Heart right ventricle (tissue), 16 donors: ENCODE measurements at regions of chr6 and their contacts with region 1.

Region 1: DNA sequence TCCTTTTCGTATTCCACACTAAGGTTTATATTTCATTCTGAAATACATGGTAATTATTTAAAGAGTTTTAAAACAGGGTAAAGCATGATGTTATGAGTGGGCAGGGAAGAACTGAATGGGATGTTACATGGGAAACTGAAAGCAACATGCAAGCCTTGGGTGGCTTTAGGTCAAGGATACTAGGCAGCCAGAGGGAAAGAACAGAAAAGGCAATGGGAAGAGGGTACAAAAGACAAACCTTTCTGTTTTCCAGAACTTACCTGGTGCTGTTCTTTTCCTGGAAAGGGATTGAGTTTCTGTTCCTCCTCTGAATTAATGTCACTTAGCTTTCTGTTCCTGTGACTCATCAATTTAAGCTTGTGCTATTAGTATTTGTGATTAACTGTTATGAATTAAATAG is 71.2 kb upstream of the SMIM8 start:
- DNase-seq: no peak
- ATAC-seq: no peak
- H3K4me3 ChIP-seq: no peak overlapping the region
- H3K27ac ChIP-seq: no peak overlapping the region
- H3K4me1 ChIP-seq: no peaks in the 10 kb centered on the region
- H3K27me3 ChIP-seq: no peaks in the 10 kb centered on the region
- CTCF ChIP-seq: no peak

Region 2: GRCh38 chr6:87078983-87079616 is 172.1 kb before region 1 on chr6:
- intact Hi-C with region 1: loop called in 1 of 10 experiments (anchors 10 kb)
- DNase-seq: peak; percentile 31 to 52
- ATAC-seq: peak in 5 of 8 donors; percentile 43 to 80 (median 58)
- H3K4me3 ChIP-seq: no peak overlapping the region
- H3K27ac ChIP-seq: no peak overlapping the region
- H3K4me1 ChIP-seq: no peaks in the 10 kb centered on the region
- H3K27me3 ChIP-seq: peaks cover 0 to 5% (median 0%) of the 10 kb centered on the region in 7 donors
- CTCF ChIP-seq: peak; percentile 60 to 94 (median 83)

Region 3: DNA sequence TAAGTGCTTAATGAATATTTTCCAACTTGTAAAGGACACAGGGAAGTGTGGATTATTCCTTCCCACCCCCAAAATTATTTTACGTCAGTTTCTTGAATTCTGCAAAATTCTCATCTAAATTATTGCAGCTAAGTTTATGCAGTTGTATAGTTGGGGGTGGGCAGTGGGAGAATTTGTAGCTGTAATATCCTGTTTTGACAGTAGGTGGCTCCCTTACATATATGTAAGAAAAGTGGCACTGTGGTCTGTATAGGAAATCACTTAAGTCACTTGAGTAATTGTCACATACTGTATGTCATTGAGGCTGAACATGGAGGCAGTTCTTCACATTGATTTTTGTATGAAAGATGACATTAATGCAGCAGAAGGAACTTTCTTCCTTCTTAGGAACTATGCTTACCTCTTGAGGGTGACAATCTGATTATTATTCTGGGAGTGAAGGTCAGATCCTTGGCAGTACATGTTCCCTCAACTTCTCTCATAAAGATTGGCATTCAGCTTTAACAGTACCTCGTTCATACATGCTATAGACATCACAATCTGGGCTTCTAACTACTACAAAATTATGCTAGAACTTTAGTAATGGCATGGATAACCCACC is 141.9 kb after region 1 on chr6:
- intact Hi-C with region 1: no loop called
- DNase-seq: peak in 1 of 2 donors; percentile 30
- ATAC-seq: peak in 6 of 8 donors; percentile 64 to 83 (median 78)
- H3K4me3 ChIP-seq: no peak overlapping the region
- H3K27ac ChIP-seq: no peak overlapping the region
- H3K4me1 ChIP-seq: peaks cover 0 to 3% (median 0%) of the 10 kb centered on the region in 9 donors
- H3K27me3 ChIP-seq: no peaks in the 10 kb centered on the region
- CTCF ChIP-seq: peak; percentile 58 to 82 (median 77)